ENCODE measurements at regions of chr7 and their contacts with region 1.

Region 1: DNA sequence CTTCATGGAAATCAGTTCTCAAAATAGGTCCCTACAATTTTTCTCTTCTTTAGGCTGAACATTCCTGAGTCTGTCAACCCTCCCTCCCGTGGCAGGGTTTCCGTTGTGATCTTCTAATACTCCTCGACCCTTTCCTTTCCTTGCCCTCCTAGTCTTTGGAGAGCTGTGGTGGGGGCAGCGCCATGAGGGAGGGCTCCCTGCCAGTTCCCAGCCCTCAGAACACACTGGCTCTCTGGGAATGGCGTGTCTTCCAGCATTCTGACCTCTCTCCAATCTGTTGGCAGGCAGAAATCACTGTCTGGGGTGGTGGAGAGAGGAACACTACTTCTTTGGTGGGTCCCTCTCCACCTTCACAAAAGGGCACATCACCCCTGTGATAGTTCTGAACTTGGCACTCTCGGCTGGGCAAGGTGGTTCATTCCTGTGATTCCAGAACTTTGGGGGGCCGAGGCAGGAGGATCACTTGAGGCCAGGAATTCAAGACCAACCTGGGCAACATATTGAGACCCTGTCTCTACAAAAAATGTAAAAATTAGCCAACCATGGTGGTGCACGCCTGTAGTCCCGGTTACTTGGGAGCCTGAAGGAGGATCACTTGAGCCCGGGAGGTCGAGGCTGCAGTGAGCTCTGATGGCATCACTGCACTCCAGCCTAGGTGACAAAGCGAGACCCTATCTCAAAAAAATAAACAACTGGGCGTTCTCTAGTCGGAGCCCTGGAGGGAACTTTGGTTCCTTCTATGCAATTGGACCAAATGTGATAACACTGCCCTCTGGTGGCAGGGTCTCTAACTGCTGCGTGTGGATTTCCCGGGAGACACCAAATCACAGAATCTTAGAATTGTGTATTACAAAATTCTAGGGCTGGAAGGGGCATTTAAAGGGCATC is 13.1 kb upstream of the ARPC1A start:
- DNase-seq: peak; percentile 61 to 75
- ATAC-seq: peak; percentile 81 to 86
- H3K4me3 ChIP-seq: no peak overlapping the region
- H3K27ac ChIP-seq: peak overlapping the region; percentile 32 to 60; a peak in 3 of 6 replicates
- H3K4me1 ChIP-seq: no peaks in the 10 kb centered on the region
- CTCF ChIP-seq: peak; percentile 97
- EP300 ChIP-seq: no peak
- POLR2A ChIP-seq: no peak
- RAD21 ChIP-seq: peak; percentile 97

Region 2: GRCh38 chr7:99112097-99112496 is 200.5 kb before region 1 on chr7:
- CTCF ChIA-PET with region 1: interaction called, 11 read pairs
- POLR2A ChIA-PET with region 1: no interaction called
- DNase-seq: peak in 1 of 2 experiments; percentile 51
- ATAC-seq: peak; percentile 21 to 61; a peak in 3 of 6 replicates
- H3K4me3 ChIP-seq: no peak overlapping the region
- H3K27ac ChIP-seq: peak overlapping the region; percentile 39 to 47; a peak in 5 of 6 replicates
- H3K4me1 ChIP-seq: peaks cover 58% of the 10 kb centered on the region
- CTCF ChIP-seq: no peak
- EP300 ChIP-seq: no peak
- POLR2A ChIP-seq: no peak
- RAD21 ChIP-seq: no peak

Region 3: DNA sequence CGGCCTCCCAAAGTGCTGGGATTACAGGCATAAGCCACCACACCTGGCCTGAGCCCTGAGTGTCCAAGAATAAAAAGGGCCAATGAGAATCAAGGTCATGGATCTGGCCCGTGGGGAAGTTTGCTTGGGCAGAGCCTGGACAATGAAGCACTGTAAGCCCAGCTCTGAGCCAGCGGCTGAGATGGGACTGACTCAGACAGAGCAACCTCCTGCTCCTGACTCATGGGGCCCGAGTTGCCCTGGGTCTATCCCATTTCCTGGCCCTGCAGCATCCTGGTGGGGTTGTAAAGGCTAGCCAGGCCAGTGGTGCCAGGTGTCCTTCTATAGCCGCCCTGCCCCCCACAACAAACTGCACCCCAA is 45.1 kb before region 1 on chr7:
- CTCF ChIA-PET with region 1: interaction called, 29 read pairs
- POLR2A ChIA-PET with region 1: no interaction called
- DNase-seq: peak; percentile 81 to 91
- ATAC-seq: peak; percentile 97 to 98
- H3K4me3 ChIP-seq: no peak overlapping the region
- H3K27ac ChIP-seq: peak overlapping the region; percentile 78 to 83
- H3K4me1 ChIP-seq: peaks cover 22% of the 10 kb centered on the region
- CTCF ChIP-seq: no peak
- EP300 ChIP-seq: peak in 1 of 2 experiments; percentile 21; a peak in 1 of 5 replicates
- POLR2A ChIP-seq: no peak
- RAD21 ChIP-seq: no peak

Region 4: GRCh38 chr7:99290980-99291607 is 21.5 kb before region 1 on chr7:
- CTCF ChIA-PET with region 1: interaction called, 23 read pairs
- POLR2A ChIA-PET with region 1: no interaction called
- DNase-seq: peak in 1 of 2 experiments; percentile 24
- ATAC-seq: no peak
- H3K4me3 ChIP-seq: no peak overlapping the region
- H3K27ac ChIP-seq: no peak overlapping the region
- H3K4me1 ChIP-seq: no peaks in the 10 kb centered on the region
- CTCF ChIP-seq: no peak
- EP300 ChIP-seq: no peak
- POLR2A ChIP-seq: no peak
- RAD21 ChIP-seq: no peak

Region 5: DNA sequence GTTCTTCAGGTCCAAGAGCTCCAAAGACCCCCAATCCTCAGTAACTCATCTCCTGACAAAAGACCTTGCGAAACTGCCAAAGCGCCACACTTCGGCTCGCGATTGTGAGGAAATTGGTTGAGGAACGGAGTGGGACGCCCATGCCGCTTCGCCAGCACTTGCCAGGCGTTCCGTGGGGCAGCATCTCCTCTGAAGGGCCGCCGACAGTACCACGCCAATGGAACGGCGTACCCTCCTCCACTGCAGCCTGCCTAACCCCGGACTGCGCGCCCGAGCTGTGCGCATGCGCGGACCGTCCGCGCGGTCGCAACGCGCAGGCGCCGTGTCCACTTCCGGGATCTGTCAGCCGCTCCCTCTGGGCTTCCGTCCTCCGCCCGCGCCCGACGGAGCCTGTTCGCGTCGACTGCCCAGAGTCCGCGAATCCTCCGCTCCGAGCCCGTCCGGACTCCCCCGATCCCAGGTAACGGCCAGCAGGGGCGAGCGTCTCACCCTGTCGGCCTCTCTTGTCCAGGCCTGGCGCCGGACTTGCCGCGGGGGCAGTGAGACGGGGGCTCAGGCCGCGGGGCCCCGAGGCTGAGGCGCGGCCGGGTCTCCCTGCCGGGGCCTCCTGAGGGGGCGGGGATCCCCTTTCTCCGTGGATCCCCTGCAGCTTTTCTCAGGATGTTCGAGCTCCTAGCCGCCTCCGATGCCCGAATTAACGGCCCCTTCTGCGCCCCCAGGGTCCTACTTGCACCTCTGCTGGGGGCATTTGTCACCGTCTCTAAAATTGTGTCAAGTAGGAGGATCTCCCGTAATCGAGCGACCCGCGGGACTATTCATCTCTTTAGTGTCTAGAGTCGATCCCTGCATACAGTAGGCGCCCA is 13.2 kb after region 1 on chr7 and contains the start of gene ARPC1A:
- CTCF ChIA-PET with region 1: interaction called, 56 read pairs
- POLR2A ChIA-PET with region 1: no interaction called
- DNase-seq: peak; percentile 91 to 92
- ATAC-seq: peak; percentile 96 to 98
- H3K4me3 ChIP-seq: peak within 1 kb of the TSS; percentile 70
- H3K27ac ChIP-seq: peak within 1 kb of the TSS; percentile 96 to 97
- H3K4me1 ChIP-seq: peaks cover 40% of the 10 kb centered on the region
- CTCF ChIP-seq: no peak
- EP300 ChIP-seq: no peak
- POLR2A ChIP-seq: peak; percentile 98
- RAD21 ChIP-seq: peak in 1 of 2 experiments; percentile 15; a peak in 2 of 5 replicates
- polyA plus RNA-seq, gene ARPC1A: 120 TPM in 2 replicates

Region 6: DNA sequence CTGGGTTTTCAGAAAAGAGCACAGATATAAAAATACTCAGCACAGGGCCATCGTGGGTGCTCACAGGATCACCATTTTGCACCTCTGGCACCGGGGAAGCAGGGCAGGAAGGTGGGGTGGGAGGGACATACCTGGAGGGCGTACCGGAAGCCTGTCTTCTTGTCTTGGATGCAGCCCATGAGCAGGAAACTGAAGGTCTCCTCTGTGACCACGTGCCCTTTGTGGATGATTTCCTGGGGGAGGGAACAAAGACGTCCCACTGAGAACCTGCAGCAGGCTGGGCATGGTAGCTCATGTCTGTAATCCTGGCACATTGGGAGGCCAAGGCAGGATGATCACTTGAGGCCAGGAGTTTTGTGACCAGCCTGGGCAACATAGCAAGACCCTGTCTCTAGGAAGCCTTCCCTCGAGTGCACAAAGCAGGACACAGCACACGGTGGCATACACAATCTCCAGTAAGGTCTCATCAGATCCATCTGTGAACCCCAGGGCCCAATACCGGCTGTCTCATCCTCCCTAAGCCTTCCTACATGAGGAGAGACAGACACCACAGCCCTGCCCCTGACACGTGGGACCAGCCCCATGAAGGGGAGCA is 116.5 kb after region 1 on chr7:
- CTCF ChIA-PET with region 1: no interaction called
- POLR2A ChIA-PET with region 1: no interaction called
- DNase-seq: no peak
- ATAC-seq: peak; percentile 14 to 31; a peak in 2 of 6 replicates
- H3K4me3 ChIP-seq: no peak overlapping the region
- H3K27ac ChIP-seq: no peak overlapping the region
- H3K4me1 ChIP-seq: no peaks in the 10 kb centered on the region
- CTCF ChIP-seq: no peak
- EP300 ChIP-seq: no peak
- POLR2A ChIP-seq: no peak
- RAD21 ChIP-seq: no peak

Region 7: GRCh38 chr7:99525713-99526440 is 213.3 kb after region 1 on chr7:
- CTCF ChIA-PET with region 1: no interaction called
- POLR2A ChIA-PET with region 1: no interaction called
- DNase-seq: peak in 1 of 2 experiments; percentile 38
- ATAC-seq: peak; percentile 59 to 77; a peak in 4 of 6 replicates
- H3K4me3 ChIP-seq: no peak overlapping the region
- H3K27ac ChIP-seq: no peak overlapping the region
- H3K4me1 ChIP-seq: no peaks in the 10 kb centered on the region
- CTCF ChIP-seq: no peak
- EP300 ChIP-seq: no peak
- POLR2A ChIP-seq: no peak
- RAD21 ChIP-seq: peak; percentile 35 to 72; a peak in 4 of 5 replicates

Region 8: DNA sequence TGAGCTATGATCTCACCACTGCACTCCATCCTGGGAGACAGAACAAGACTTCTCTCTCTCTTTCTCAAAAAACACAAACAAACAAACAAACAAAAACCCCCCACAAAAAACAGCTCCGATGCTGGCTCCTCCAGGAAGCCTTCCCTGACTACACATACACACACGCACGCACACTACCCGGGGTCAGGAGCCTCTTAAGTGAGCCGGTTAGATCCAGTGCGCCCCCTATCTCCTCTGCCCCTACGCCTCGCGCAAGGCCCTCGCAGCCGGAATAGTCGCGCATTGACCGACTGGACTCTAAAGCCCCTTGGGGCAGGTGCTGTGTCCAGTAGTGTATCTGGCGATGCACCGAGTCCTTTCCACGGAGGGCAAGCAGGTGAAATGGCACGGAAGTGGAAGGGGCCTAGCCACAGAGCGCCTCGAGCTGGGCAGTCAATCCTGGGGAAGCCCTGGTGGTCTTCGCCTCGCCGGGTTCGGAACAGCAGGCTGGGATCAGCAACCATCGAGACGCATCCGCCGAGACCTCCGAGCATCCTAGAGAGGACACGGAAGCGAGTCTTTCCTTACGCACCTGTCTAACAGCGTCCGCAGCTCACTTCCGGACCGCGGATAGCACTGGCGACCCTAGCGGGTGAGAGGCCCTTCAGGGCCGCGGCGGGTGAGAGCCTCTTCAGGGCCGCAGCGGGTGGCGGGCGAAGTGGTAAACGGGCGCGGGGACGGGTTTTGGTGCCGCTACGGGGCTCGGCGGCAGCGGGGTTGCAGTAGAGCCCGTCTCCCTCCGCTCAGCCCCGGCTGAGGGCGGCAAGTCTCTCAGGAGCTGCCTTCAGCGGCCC is 304.0 kb after region 1 on chr7 and contains the start of gene ZSCAN25:
- CTCF ChIA-PET with region 1: no interaction called
- POLR2A ChIA-PET with region 1: no interaction called
- DNase-seq: peak; percentile 96 to 97
- ATAC-seq: peak; percentile 97 to 98
- H3K4me3 ChIP-seq: peak within 1 kb of the TSS; percentile 85
- H3K27ac ChIP-seq: peak within 1 kb of the TSS; percentile 92 to 95
- H3K4me1 ChIP-seq: peaks cover 20% of the 10 kb centered on the region
- CTCF ChIP-seq: peak; percentile 67
- EP300 ChIP-seq: no peak
- POLR2A ChIP-seq: peak; percentile 69
- RAD21 ChIP-seq: peak; percentile 67 to 69
- polyA plus RNA-seq, gene ZSCAN25: 9.3 and 10.1 TPM in 2 replicates

Measured in A549 (cell line).